Activated CD4-positive, alpha-beta T cell treated with anti-CD3 and anti-CD28 coated beads for 36 hours (primary cell): ENCODE measurements at regions of chr7 and their contacts with region 1.

Region 1: GRCh38 chr7:100705753-100706671 is at the start of gene POP7:
- DNase-seq: peak; percentile 99
- ATAC-seq: peak; percentile 96
- H3K4me3 Mint-ChIP-seq: peak within 1 kb of the TSS; percentile 96
- H3K27ac Mint-ChIP-seq: peak within 1 kb of the TSS; percentile 96
- H3K4me1 Mint-ChIP-seq: peaks cover 12% of the 10 kb centered on the region
- H3K27me3 Mint-ChIP-seq: no peaks in the 10 kb centered on the region
- total RNA-seq, gene POP7: 46.1 to 59.4 TPM

Region 2: GRCh38 chr7:100611974-100612729 is 93.9 kb before region 1 on chr7 and contains the start of gene MOSPD3:
- CTCF ChIA-PET with region 1: interaction called, 22 read pairs
- POLR2A ChIA-PET with region 1: interaction called, 5 read pairs
- intact Hi-C with region 1: loop called in 1 of 2 experiments (anchors 1 kb)
- DNase-seq: peak; percentile 99
- ATAC-seq: peak; percentile 94
- H3K4me3 Mint-ChIP-seq: peak within 1 kb of the TSS; percentile 83
- H3K27ac Mint-ChIP-seq: peak within 1 kb of the TSS; percentile 100
- H3K4me1 Mint-ChIP-seq: peaks cover 17% of the 10 kb centered on the region
- H3K27me3 Mint-ChIP-seq: no peaks in the 10 kb centered on the region
- total RNA-seq, gene MOSPD3: 14.4 to 19.9 TPM

Region 3: GRCh38 chr7:100673300-100673941 is 32.6 kb before region 1 on chr7 and contains the start of gene GNB2:
- CTCF ChIA-PET with region 1: interaction called, 11 read pairs
- POLR2A ChIA-PET with region 1: interaction called, 7 read pairs
- intact Hi-C with region 1: loop called (anchors 1 kb)
- DNase-seq: peak; percentile 99
- ATAC-seq: peak; percentile 78
- H3K4me3 Mint-ChIP-seq: peak within 1 kb of the TSS; percentile 94
- H3K27ac Mint-ChIP-seq: peak within 1 kb of the TSS; percentile 93
- H3K4me1 Mint-ChIP-seq: peaks cover 12% of the 10 kb centered on the region
- H3K27me3 Mint-ChIP-seq: no peaks in the 10 kb centered on the region
- total RNA-seq, gene GNB2: 172 to 200 TPM

Region 4: GRCh38 chr7:100719523-100720319 is 13.7 kb after region 1 on chr7:
- CTCF ChIA-PET with region 1: interaction called, 20 read pairs
- POLR2A ChIA-PET with region 1: interaction called, 5 read pairs
- intact Hi-C with region 1: no loop called
- DNase-seq: no peak
- ATAC-seq: no peak
- H3K4me3 Mint-ChIP-seq: no peak overlapping the region
- H3K27ac Mint-ChIP-seq: no peak overlapping the region
- H3K4me1 Mint-ChIP-seq: peaks cover 2% of the 10 kb centered on the region
- H3K27me3 Mint-ChIP-seq: peaks cover 37% of the 10 kb centered on the region

Region 5: DNA sequence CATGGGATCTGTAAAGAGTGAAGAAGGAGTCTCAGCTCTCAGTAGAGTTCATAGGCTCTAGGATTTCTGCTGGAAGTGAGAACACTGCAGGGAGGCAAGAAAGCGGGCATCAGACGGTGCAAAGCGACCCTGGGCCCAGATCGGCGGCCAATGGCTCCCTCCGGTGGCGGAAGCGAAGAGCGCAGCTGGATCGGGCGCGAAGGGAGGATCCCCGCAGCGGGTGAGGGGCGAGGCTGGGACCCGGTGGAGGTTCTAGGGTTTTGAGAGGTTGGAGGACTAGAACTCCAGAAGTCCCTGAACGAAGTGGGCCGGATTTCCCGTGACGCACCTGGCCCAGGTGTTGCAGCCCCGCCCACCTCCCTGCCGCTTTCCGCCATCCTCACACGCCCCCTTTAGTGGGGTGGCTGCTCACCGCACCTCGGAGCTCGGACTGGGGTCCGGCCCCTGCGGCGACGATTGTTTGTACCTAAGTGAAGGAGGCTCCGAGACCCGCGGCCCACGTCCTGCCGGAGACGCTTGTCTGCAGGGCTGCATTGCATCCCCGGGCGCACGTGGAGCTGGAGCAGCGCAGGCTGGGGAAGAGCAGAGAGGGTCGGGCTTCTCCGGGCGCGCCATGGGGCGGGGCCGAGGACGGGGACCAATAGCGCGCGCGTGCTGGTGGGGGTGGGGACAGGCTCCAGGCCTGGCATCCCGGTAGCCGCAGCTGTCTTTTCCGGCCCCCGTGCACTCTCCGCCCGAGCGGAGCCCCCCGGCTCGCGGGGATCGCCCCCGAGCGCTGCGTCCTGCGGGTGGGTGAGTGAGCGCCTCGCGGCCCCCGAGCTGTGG is 146.2 kb after region 1 on chr7 and contains the start of gene SLC12A9:
- CTCF ChIA-PET with region 1: interaction called, 32 read pairs
- POLR2A ChIA-PET with region 1: interaction called, 5 read pairs
- intact Hi-C with region 1: loop called (anchors 1 kb)
- DNase-seq: peak; percentile 93
- ATAC-seq: peak; percentile 98
- H3K4me3 Mint-ChIP-seq: peak within 1 kb of the TSS; percentile 87
- H3K27ac Mint-ChIP-seq: peak within 1 kb of the TSS; percentile 91
- H3K4me1 Mint-ChIP-seq: peaks cover 11% of the 10 kb centered on the region
- H3K27me3 Mint-ChIP-seq: no peaks in the 10 kb centered on the region
- total RNA-seq, gene SLC12A9: 13.6 to 15.6 TPM

Region 6: DNA sequence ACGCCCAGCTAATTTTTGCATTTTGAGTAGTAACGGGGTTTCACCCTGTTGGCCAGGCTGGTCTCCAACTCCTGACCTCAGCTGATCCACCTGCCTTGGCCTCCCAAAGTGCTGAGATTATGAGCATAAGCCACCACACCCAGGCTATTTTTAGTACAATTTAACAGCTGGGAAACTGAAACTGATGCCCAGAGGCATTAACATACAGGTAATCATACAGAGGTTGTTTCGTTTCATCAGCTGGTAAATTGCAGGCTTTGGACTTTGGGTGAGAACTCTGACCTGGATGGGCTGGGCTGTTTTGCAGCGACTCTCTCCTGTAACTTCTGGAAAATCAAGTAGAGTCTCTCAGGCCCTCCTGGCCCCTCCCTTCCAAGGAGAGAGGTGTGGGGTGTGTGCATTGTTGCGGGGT is 195.9 kb after region 1 on chr7:
- CTCF ChIA-PET with region 1: no interaction called
- POLR2A ChIA-PET with region 1: no interaction called
- intact Hi-C with region 1: no loop called
- DNase-seq: no peak
- ATAC-seq: no peak
- H3K4me3 Mint-ChIP-seq: no peak overlapping the region
- H3K27ac Mint-ChIP-seq: no peak overlapping the region
- H3K4me1 Mint-ChIP-seq: peaks cover 2% of the 10 kb centered on the region
- H3K27me3 Mint-ChIP-seq: peaks cover 17% of the 10 kb centered on the region

Region 7: DNA sequence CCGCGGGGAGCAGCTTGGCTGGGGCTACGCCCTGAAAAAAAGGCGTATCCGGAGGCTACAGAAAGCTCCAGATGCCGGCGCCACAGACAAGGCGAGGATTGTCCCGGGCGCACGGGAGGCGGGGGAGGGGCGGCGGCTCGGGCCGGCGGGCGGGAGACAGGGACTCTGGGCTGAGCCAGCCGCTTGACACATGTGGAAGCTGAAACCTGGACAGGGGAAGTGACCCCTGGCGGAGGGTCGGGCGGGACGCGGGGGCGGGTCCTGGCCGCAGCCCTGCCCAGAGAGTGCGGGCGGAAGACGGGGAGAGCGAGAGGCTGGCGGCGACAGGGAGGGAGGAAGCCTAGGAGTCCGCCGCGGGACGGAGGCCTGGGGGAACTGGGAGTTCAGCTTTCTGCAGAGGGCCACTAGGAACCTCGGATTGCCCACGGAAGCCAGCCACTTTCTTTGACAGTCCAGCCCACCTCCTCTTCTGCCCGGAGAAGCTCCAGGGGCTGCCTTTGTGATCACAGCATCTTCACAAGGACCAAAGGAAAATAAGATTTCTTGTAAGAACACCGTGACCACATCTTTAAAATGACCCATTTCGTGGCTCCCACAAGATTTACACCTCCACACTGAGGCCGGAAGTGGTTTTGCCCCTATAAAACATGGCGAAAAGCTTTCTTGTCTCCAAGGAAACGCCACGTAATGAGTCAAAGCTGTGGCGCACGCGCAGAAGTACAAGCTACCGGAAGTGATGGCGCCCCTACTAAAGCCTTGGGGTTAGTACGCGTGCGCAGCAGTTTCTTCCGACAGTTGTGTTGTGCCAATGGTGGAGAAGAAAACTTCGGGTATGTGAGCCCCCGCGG is 511.6 kb after region 1 on chr7 and contains the starts of genes PLOD3 and ZNHIT1:
- CTCF ChIA-PET with region 1: interaction called, 5 read pairs
- POLR2A ChIA-PET with region 1: interaction called, 3 read pairs
- intact Hi-C with region 1: loop called in 1 of 2 experiments (anchors 5 kb)
- DNase-seq: peak; percentile 97
- ATAC-seq: peak; percentile 88
- H3K4me3 Mint-ChIP-seq: peak within 1 kb of the TSS; percentile 99
- H3K27ac Mint-ChIP-seq: peak within 1 kb of the TSS; percentile 85
- H3K4me1 Mint-ChIP-seq: peaks cover 31% of the 10 kb centered on the region
- H3K27me3 Mint-ChIP-seq: no peaks in the 10 kb centered on the region
- total RNA-seq, gene PLOD3: 30.7 to 35.9 TPM
- total RNA-seq, gene ZNHIT1: 44.2 TPM